SK-N-SH (cell line): ENCODE measurements at regions of chr12 and their contacts with region 1.

Region 1: GRCh38 chr12:113152835-113153814 is 3.6 kb downstream of the CFAP73 start:
- DNase-seq: peak; percentile 93
- H3K4me3 ChIP-seq: peak overlapping the region; percentile 34 to 56; a peak in 3 of 4 replicates
- H3K27ac ChIP-seq: no peak overlapping the region
- H3K4me1 ChIP-seq: peaks cover 5 to 11% of the 10 kb centered on the region in 2 experiments; a peak in 2 of 4 replicates
- H3K27me3 ChIP-seq: peaks cover 24% of the 10 kb centered on the region
- CTCF ChIP-seq: peak; percentile 53
- EP300 ChIP-seq: no peak
- RAD21 ChIP-seq: peak; percentile 69

Region 2: GRCh38 chr12:113135178-113136127 is 17.7 kb before region 1 on chr12 and contains the start of gene RASAL1:
- CTCF ChIA-PET with region 1: interaction called, 49 read pairs
- POLR2A ChIA-PET with region 1: no interaction called
- DNase-seq: peak; percentile 81
- H3K4me3 ChIP-seq: no peak within 1 kb of the TSS; a peak in 1 of 4 replicates
- H3K27ac ChIP-seq: no peak within 1 kb of the TSS
- H3K4me1 ChIP-seq: no peaks in the 10 kb centered on the region; a peak in 1 of 4 replicates
- H3K27me3 ChIP-seq: no peaks in the 10 kb centered on the region
- CTCF ChIP-seq: peak; percentile 27; the same call in 1 of the 2 replicates
- EP300 ChIP-seq: no peak
- RAD21 ChIP-seq: no peak
- polyA plus RNA-seq, gene RASAL1: not detected in 2 replicates

Region 3: GRCh38 chr12:114213055-114213581 is 1060.0 kb after region 1 on chr12:
- CTCF ChIA-PET with region 1: no interaction called
- POLR2A ChIA-PET with region 1: no interaction called
- DNase-seq: no peak
- H3K4me3 ChIP-seq: no peak overlapping the region
- H3K27ac ChIP-seq: no peak overlapping the region
- H3K4me1 ChIP-seq: no peaks in the 10 kb centered on the region
- H3K27me3 ChIP-seq: no peaks in the 10 kb centered on the region
- CTCF ChIP-seq: no peak
- EP300 ChIP-seq: no peak
- RAD21 ChIP-seq: no peak